Activated T-helper 2 cell treated with anti-CD3 and anti-CD28 coated beads, Interferon-gamma antibody, Interleukin-2, Interleukin-4, amounts not matched to agents 10 μg/mL and 5 μg/mL and 100 μg/mL, durations not matched to agents 14 hours and 24 hours and 36 hours (primary cell): ENCODE measurements at regions of chr4 and their contacts with region 1.

Region 1: GRCh38 chr4:37686373-37687193 is at the start of gene RELL1:
- DNase-seq: peak; percentile 99
- H3K4me3 Mint-ChIP-seq: peak within 1 kb of the TSS; percentile 92
- H3K27ac Mint-ChIP-seq: peak within 1 kb of the TSS; percentile 97
- H3K4me1 Mint-ChIP-seq: peaks cover 34% of the 10 kb centered on the region
- H3K27me3 Mint-ChIP-seq: peaks cover 11% of the 10 kb centered on the region
- total RNA-seq, gene RELL1: 19.3 and 22.2 TPM in 2 replicates

Region 2: GRCh38 chr4:37648096-37648817 is 38.3 kb before region 1 on chr4:
- intact Hi-C with region 1: loop called (anchors 5 kb)
- DNase-seq: no peak
- H3K4me3 Mint-ChIP-seq: no peak overlapping the region
- H3K27ac Mint-ChIP-seq: no peak overlapping the region
- H3K4me1 Mint-ChIP-seq: peaks cover 26% of the 10 kb centered on the region
- H3K27me3 Mint-ChIP-seq: no peaks in the 10 kb centered on the region

Region 3: GRCh38 chr4:37675587-37676290 is 10.8 kb before region 1 on chr4:
- intact Hi-C with region 1: loop called (anchors 1 kb)
- DNase-seq: peak; percentile 23
- H3K4me3 Mint-ChIP-seq: peak overlapping the region; percentile 54
- H3K27ac Mint-ChIP-seq: peak overlapping the region; percentile 29
- H3K4me1 Mint-ChIP-seq: peaks cover 59% of the 10 kb centered on the region
- H3K27me3 Mint-ChIP-seq: no peaks in the 10 kb centered on the region

Region 4: GRCh38 chr4:37721995-37722638 is 35.5 kb after region 1 on chr4:
- intact Hi-C with region 1: loop called (anchors 1 kb)
- DNase-seq: peak; percentile 20
- H3K4me3 Mint-ChIP-seq: no peak overlapping the region
- H3K27ac Mint-ChIP-seq: no peak overlapping the region
- H3K4me1 Mint-ChIP-seq: peaks cover 33% of the 10 kb centered on the region
- H3K27me3 Mint-ChIP-seq: peaks cover 10% of the 10 kb centered on the region

Region 5: DNA sequence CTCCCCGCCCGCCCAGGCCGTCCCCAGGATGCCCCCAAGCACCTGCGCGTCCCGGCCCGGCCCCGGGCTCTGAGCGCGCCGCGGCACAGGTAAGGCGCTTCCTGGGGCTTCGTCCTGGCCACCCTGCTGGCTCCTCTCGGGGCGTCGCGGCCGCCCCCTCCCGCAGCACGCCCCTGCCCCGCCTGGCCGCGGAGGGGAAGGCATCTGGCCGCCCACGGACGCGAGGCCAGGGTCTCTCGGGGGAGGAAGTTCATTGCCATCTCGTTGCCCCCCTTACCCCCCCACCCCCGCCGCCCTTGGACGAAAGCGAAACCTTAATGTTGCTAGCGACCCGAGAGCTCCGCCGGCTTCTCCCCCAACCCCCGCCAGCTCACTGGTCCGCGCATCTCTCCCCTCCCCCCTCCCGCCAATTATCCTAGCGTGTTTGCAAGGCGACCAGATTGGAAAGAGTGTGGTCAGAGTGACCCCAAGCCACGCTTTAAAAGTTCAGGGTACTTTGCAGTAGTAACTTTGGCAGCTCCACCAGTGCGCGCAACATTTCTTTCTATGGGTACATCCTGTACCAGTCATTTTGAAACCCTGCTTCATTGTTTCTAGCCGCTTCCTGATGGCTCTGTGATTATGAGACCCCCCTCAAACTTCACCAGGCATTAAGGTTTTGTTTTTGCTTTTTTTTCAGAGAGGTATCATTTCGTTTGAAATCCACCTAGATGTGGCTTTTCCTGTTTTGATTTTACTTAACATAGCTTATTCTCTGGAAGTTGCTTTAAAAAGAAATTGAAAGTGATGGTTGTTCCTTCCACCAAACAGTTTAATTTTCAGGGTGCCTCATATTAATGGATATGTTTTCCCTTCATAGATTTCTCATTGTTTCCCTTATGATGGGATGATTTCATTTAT is 204.9 kb after region 1 on chr4:
- intact Hi-C with region 1: loop called (anchors 10 kb)
- DNase-seq: peak; percentile 63
- H3K4me3 Mint-ChIP-seq: peak overlapping the region; percentile 87
- H3K27ac Mint-ChIP-seq: peak overlapping the region; percentile 89
- H3K4me1 Mint-ChIP-seq: peaks cover 43% of the 10 kb centered on the region
- H3K27me3 Mint-ChIP-seq: peaks cover 10% of the 10 kb centered on the region

Region 6: GRCh38 chr4:38663801-38664705 is 977.5 kb after region 1 on chr4 and contains the start of gene KLF3:
- intact Hi-C with region 1: loop called (anchors 10 kb)
- DNase-seq: peak; percentile 78
- H3K4me3 Mint-ChIP-seq: peak within 1 kb of the TSS; percentile 75
- H3K27ac Mint-ChIP-seq: no peak within 1 kb of the TSS
- H3K4me1 Mint-ChIP-seq: peaks cover 23% of the 10 kb centered on the region
- H3K27me3 Mint-ChIP-seq: peaks cover 65% of the 10 kb centered on the region
- total RNA-seq, gene KLF3: 0.62 and 0.71 TPM in 2 replicates

Region 7: DNA sequence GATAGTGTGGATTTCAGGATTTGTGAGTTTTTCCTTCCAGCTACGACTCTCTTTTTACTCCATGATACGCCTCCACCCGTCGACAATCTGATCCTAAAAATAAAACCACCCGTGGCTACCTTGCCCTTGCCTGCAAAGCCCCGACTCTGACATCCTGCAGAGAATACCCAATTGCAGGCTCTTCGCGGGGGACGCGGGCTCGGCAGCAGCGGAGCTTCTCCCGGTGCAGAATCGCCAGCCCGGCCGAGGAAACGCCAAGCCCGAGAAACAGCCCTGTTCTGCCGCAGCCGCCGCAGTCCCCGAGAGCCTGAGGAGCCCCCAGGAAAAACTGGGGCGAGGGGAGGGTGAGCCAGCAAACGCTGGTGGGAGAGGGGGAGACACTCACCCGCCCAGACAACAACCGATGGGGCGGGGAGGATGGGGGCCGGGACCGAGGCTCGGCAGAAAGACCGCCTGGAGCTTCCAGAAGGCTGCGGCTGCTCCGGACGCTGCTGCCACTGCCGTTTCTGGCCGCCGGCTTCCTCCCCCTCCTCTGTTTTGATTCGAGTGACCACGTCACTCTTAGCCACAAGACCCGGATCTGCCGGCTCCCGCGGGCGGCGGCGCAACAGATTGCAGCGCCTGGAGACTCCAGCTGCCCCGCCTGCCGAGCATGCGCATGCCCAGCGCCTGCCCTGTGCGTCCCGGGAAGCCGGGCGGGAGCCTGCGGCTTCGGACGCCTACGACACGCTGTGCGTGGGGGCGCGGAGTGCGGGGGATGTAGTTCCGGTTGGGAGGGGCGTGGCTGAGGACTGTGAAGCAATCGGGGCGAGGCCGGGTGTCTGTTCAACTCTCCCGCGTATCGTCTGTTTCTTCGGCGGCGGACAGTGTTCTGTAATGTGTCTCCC is 1952.0 kb after region 1 on chr4 and contains the start of gene SMIM14:
- intact Hi-C with region 1: loop called (anchors 5 kb)
- DNase-seq: peak; percentile 86
- H3K4me3 Mint-ChIP-seq: peak within 1 kb of the TSS; percentile 86
- H3K27ac Mint-ChIP-seq: peak within 1 kb of the TSS; percentile 67
- H3K4me1 Mint-ChIP-seq: peaks cover 27% of the 10 kb centered on the region
- H3K27me3 Mint-ChIP-seq: peaks cover 28% of the 10 kb centered on the region
- total RNA-seq, gene SMIM14: 1.7 and 1.9 TPM in 2 replicates